ENCODE measurements at regions of chr20 and their contacts with region 1.

Region 1: DNA sequence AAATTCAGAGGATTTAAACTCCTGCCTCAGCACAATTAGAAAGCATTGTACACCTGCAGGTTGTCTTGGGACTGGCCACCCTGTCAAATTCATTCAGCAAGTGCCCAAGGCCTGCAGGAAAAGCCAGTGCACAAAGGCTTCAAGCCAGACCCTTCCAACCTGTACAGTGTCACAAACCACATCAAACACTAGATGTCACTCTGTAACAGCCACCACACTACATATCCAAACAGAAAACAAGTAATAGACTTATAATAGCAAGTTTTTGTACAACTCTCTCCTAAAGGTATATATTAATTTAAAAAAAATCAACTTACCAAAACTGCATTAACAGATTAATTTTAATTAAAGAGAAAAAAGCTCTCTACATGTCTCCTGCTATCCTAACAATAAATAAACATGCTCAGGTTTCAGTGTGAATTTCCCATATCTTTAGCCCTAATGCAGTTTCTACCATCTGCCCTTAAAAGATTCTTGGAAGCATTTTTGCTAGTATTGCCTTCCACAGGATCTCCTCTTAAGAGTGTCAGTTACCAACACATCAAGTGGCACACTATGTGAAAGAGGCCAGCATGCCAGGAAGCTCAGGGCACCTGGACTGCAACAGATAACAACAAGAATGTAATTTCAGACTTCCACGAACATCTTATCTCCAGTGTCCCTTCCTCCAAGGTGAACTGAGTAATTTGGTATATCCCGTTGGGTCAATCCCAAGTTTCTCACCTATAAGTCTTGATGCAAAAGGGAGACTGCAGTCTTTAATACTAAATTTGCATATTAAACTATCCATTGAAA is 47.5 kb downstream of the RALGAPA2 start:
- DNase-seq: no peak
- ATAC-seq: peak; percentile 85 to 89 (median 88)
- H3K4me3 ChIP-seq: no peak overlapping the region
- H3K27ac ChIP-seq: no peak overlapping the region
- H3K4me1 ChIP-seq: peaks cover 0 to 13% (median 6%) of the 10 kb centered on the region in 4 donors
- H3K27me3 ChIP-seq: no peaks in the 10 kb centered on the region
- CTCF ChIP-seq: peak; percentile 59 to 75 (median 70)
- POLR2A ChIP-seq: no peak

Region 2: DNA sequence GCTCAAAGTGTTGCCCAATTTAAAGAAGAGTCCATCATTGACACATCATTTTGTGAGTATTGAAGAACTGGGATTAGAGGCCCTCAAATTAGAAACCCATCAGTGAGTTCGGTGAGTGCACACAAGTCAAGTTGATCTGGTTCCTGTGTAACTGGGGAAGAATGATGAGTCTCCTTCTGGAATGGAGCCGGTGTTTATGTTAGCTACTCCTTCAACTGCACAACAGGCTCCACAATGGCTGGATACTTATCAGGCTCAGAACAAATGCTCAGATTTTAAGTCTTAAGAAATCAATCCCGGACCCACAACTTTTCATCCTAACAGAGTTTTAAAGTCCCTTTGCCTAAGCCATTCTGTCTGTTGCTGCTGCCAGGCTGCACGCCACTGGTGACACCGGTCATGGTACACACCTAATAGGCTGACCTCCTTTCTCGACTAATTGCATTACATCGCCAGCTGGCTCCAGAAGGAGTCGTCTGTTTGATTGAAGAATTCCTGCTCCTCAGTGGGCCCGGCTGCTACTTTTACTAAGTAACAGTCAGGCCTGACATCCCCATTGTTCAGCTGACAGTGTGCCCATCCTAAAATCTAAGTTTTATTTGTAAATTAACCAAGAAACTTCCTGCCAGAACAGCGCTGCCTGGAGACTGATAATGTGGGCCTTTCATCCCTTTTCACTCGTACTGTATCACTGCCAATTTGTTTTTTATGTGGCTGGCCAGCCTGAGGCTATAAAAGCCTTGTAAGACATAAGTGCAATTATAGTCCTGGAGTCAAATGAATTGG is 166.7 kb before region 1 on chr20:
- intact Hi-C with region 1: no loop called
- DNase-seq: no peak
- ATAC-seq: no peak
- H3K4me3 ChIP-seq: no peak overlapping the region
- H3K27ac ChIP-seq: no peak overlapping the region
- H3K4me1 ChIP-seq: peaks cover 0 to 13% (median 6%) of the 10 kb centered on the region in 4 donors
- H3K27me3 ChIP-seq: no peaks in the 10 kb centered on the region
- CTCF ChIP-seq: no peak
- POLR2A ChIP-seq: no peak

Region 3: GRCh38 chr20:20824924-20825584 is 160.1 kb after region 1 on chr20:
- intact Hi-C with region 1: loop called (anchors 10 kb)
- DNase-seq: peak; percentile 63 to 76 (median 69)
- ATAC-seq: peak; percentile 73 to 91 (median 84)
- H3K4me3 ChIP-seq: no peak overlapping the region
- H3K27ac ChIP-seq: no peak overlapping the region
- H3K4me1 ChIP-seq: no peaks in the 10 kb centered on the region
- H3K27me3 ChIP-seq: no peaks in the 10 kb centered on the region
- CTCF ChIP-seq: peak; percentile 74 to 88 (median 81)
- POLR2A ChIP-seq: no peak

Measured in right lobe of liver (tissue), 6 donors.